ENCODE measurements at regions of chr12 and their contacts with region 1.

Region 1: GRCh38 chr12:47715393-47715876 is 9.6 kb upstream of the RPAP3 start:
- DNase-seq: peak; percentile 64 to 91 (median 78)
- ATAC-seq: peak; percentile 72
- H3K4me3 ChIP-seq: no peak overlapping the region
- H3K4me3 Mint-ChIP-seq: peak overlapping the region; percentile 48
- H3K27ac ChIP-seq: no peak overlapping the region
- H3K27ac Mint-ChIP-seq: peak overlapping the region; percentile 21
- H3K4me1 ChIP-seq: peaks cover 31% of the 10 kb centered on the region
- H3K4me1 Mint-ChIP-seq: peaks cover 26% of the 10 kb centered on the region
- H3K27me3 ChIP-seq: no peaks in the 10 kb centered on the region
- H3K27me3 Mint-ChIP-seq: no peaks in the 10 kb centered on the region
- CTCF ChIP-seq: peak; percentile 80

Region 2: GRCh38 chr12:47767216-47767724 is 51.8 kb after region 1 on chr12:
- CTCF ChIA-PET with region 1: interaction called, 11 read pairs
- POLR2A ChIA-PET with region 1: no interaction called
- intact Hi-C with region 1: loop called (anchors 1 to 2 kb)
- DNase-seq: peak; percentile 48 to 86 (median 67)
- ATAC-seq: peak; percentile 80
- H3K4me3 ChIP-seq: no peak overlapping the region
- H3K4me3 Mint-ChIP-seq: no peak overlapping the region
- H3K27ac ChIP-seq: no peak overlapping the region
- H3K27ac Mint-ChIP-seq: no peak overlapping the region
- H3K4me1 ChIP-seq: peaks cover 9% of the 10 kb centered on the region
- H3K4me1 Mint-ChIP-seq: peaks cover 19% of the 10 kb centered on the region
- H3K27me3 ChIP-seq: no peaks in the 10 kb centered on the region
- H3K27me3 Mint-ChIP-seq: no peaks in the 10 kb centered on the region
- CTCF ChIP-seq: peak; percentile 31

Region 3: DNA sequence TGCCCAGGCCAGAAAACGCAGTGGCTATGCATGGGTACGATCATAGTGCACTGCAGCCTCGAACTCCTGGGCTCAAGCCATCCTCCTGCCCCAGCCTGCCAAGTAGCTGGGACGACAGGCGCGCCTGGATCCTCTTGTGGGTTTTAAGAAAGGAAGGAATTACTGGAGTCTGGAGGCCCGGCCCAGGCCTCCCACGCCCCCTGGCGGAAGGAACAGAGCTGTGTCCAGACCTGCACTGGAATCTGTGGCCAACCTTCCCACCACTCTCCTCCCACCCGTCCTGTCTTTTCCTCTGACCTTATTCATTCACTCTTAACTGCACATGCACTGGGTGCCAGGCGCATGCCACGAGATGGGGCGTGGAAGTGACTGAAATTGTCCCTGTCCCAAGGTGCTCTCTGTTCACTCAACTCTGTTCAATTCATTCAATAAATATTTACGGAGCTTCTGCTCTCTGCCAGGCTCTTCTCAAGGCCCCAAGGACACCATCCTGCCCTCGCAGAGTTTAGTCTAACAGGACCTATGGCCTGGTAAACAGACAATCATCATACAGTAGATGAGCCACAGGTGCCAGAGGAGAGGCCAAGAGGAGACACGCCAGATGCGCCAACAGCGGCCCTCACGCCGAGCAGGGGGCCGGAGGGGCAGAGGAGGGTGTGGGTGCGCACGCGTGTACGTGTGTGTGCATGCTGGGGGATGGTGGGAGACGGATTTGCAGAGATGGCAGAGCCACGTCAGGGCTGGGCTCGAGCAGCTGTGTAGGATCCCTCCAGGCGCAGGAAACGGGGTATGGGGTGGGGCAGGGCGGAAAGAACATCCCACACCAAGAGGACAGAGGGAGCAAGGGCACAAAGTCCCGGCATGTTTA is 234.2 kb after region 1 on chr12:
- CTCF ChIA-PET with region 1: interaction called, 4 read pairs
- POLR2A ChIA-PET with region 1: no interaction called
- intact Hi-C with region 1: loop called (anchors 2 to 5 kb)
- DNase-seq: peak; percentile 11 to 72 (median 38)
- ATAC-seq: peak; percentile 73
- H3K4me3 ChIP-seq: no peak overlapping the region
- H3K4me3 Mint-ChIP-seq: no peak overlapping the region
- H3K27ac ChIP-seq: no peak overlapping the region
- H3K27ac Mint-ChIP-seq: no peak overlapping the region
- H3K4me1 ChIP-seq: peaks cover 5% of the 10 kb centered on the region
- H3K4me1 Mint-ChIP-seq: no peaks in the 10 kb centered on the region
- H3K27me3 ChIP-seq: no peaks in the 10 kb centered on the region
- H3K27me3 Mint-ChIP-seq: peaks cover 4% of the 10 kb centered on the region
- CTCF ChIP-seq: peak; percentile 74

Region 4: GRCh38 chr12:48165094-48165981 is 449.9 kb after region 1 on chr12:
- CTCF ChIA-PET with region 1: no interaction called
- POLR2A ChIA-PET with region 1: no interaction called
- intact Hi-C with region 1: loop called (anchors 1 to 2 kb)
- DNase-seq: peak in 11 of 14 experiments; percentile 11 to 87 (median 44)
- ATAC-seq: peak; percentile 87
- H3K4me3 ChIP-seq: no peak overlapping the region
- H3K4me3 Mint-ChIP-seq: no peak overlapping the region
- H3K27ac ChIP-seq: no peak overlapping the region
- H3K27ac Mint-ChIP-seq: no peak overlapping the region
- H3K4me1 ChIP-seq: no peaks in the 10 kb centered on the region
- H3K4me1 Mint-ChIP-seq: peaks cover 7% of the 10 kb centered on the region
- H3K27me3 ChIP-seq: no peaks in the 10 kb centered on the region
- H3K27me3 Mint-ChIP-seq: peaks cover 20% of the 10 kb centered on the region
- CTCF ChIP-seq: peak; percentile 98

Region 5: GRCh38 chr12:48454667-48455066 is 739.2 kb after region 1 on chr12:
- CTCF ChIA-PET with region 1: no interaction called
- POLR2A ChIA-PET with region 1: no interaction called
- intact Hi-C with region 1: loop called in 1 of 2 experiments (anchors 10 kb)
- DNase-seq: peak in 3 of 14 experiments; percentile 46 to 59 (median 51)
- ATAC-seq: peak; percentile 65
- H3K4me3 ChIP-seq: no peak overlapping the region
- H3K4me3 Mint-ChIP-seq: no peak overlapping the region
- H3K27ac ChIP-seq: no peak overlapping the region
- H3K27ac Mint-ChIP-seq: no peak overlapping the region
- H3K4me1 ChIP-seq: no peaks in the 10 kb centered on the region
- H3K4me1 Mint-ChIP-seq: no peaks in the 10 kb centered on the region
- H3K27me3 ChIP-seq: no peaks in the 10 kb centered on the region
- H3K27me3 Mint-ChIP-seq: peaks cover 21% of the 10 kb centered on the region
- CTCF ChIP-seq: peak; percentile 58

Region 6: GRCh38 chr12:49687941-49688340 is 1972.5 kb after region 1 on chr12:
- CTCF ChIA-PET with region 1: no interaction called
- POLR2A ChIA-PET with region 1: no interaction called
- intact Hi-C with region 1: no loop called
- DNase-seq: no peak
- ATAC-seq: no peak
- H3K4me3 ChIP-seq: no peak overlapping the region
- H3K4me3 Mint-ChIP-seq: no peak overlapping the region
- H3K27ac ChIP-seq: no peak overlapping the region
- H3K27ac Mint-ChIP-seq: no peak overlapping the region
- H3K4me1 ChIP-seq: peaks cover 14% of the 10 kb centered on the region
- H3K4me1 Mint-ChIP-seq: peaks cover 71% of the 10 kb centered on the region
- H3K27me3 ChIP-seq: no peaks in the 10 kb centered on the region
- H3K27me3 Mint-ChIP-seq: no peaks in the 10 kb centered on the region
- CTCF ChIP-seq: no peak